ENCODE measurements at regions of chr19 and their contacts with region 1.

Region 1: GRCh38 chr19:1490311-1491113 is at the start of gene PCSK4:
- DNase-seq: peak; percentile 99
- H3K4me3 ChIP-seq: peak within 1 kb of the TSS; percentile 11 to 51 (median 35)
- H3K27ac ChIP-seq: no peak within 1 kb of the TSS
- H3K4me1 ChIP-seq: peaks cover 10% of the 10 kb centered on the region
- H3K27me3 ChIP-seq: peaks cover 0 to 6% of the 10 kb centered on the region in 2 experiments
- CTCF ChIP-seq: no peak
- POLR2A ChIP-seq: peak; percentile 8
- total RNA-seq, gene PCSK4: 0.92 and 1.2 TPM in 2 replicates

Region 2: DNA sequence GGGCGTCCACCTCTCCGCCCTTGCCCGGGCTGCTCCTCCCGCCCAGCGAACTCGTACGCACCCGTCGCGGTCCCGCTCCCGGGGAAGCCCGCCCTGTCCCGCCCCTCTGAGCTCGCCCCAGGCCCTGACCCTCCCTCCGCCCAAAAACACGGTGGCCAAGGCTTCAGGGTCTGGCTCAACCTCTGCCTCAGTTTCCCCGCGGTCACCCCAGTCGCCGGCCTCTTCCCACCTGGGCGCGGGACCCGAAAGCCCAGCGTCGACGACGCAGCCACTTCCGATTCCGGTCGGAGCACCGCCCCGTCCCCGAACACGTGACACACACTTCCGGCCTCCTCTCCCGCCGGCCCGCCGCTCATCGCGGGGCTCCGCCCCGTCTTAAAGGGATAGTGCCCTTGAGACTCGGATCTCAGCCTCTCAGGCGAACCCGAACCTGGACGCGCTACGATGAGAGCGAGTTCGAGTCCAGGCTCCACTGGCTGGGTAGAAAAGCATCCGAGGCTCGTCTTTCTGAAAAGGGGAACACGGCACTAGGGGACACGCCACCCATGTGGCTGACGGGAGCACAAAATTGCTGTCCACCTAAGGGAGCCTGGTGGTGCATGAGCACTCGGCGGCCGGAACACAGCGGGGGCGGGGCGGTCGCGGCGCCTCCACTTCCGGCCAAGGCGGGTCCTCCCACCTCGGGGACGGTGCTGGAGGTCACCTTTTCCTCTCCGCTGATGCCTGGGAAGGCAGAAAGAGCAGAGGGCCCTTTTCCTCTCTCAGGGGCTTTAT is 11.4 kb before region 1 on chr19 and contains the start of gene C19orf25:
- CTCF ChIA-PET with region 1: no interaction called
- POLR2A ChIA-PET with region 1: no interaction called
- dilution Hi-C with region 1: no loop called
- intact Hi-C with region 1: loop called (anchors 1 kb)
- DNase-seq: peak; percentile 91
- H3K4me3 ChIP-seq: peak within 1 kb of the TSS; percentile 75 to 88 (median 75)
- H3K27ac ChIP-seq: peak within 1 kb of the TSS; percentile 15
- H3K4me1 ChIP-seq: peaks cover 3% of the 10 kb centered on the region
- H3K27me3 ChIP-seq: no peaks in the 10 kb centered on the region
- CTCF ChIP-seq: no peak
- POLR2A ChIP-seq: peak; percentile 90
- total RNA-seq, gene C19orf25: 28.0 and 29.0 TPM in 2 replicates

Region 3: DNA sequence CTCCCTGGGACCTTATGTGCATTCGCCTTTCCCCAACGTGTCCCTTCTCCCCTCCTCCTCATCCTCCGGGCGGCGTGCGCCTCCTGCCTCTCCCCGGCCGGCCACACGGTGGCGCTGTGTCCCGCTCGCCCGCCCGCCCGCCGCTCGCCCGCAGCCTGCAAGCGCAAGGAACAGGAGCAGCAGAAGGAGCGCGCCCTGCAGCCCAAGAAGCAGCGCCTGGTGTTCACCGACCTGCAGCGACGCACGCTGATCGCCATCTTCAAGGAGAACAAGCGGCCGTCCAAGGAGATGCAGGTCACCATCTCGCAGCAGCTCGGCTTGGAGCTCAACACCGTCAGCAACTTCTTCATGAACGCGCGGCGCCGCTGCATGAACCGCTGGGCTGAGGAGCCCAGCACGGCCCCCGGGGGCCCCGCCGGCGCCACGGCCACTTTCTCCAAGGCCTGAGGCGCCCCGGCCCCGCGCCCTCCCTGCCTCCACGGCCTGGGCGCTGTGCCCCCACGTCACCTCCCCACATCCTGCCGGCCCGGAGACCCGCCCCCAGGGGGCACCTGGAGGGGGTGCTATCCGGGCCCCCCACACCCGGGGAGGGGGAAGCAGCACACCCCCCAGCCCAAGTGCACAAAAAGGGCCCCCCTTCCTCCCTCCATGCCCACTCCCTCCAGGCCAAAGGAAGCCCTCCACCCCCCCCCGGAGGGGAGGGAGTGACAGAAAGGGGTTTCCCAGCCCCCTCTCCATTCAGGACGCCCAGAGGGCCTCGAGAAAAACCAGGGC is 284.7 kb after region 1 on chr19:
- CTCF ChIA-PET with region 1: no interaction called
- POLR2A ChIA-PET with region 1: no interaction called
- dilution Hi-C with region 1: no loop called
- intact Hi-C with region 1: no loop called
- DNase-seq: no peak
- H3K4me3 ChIP-seq: no peak overlapping the region
- H3K27ac ChIP-seq: no peak overlapping the region
- H3K4me1 ChIP-seq: no peaks in the 10 kb centered on the region
- H3K27me3 ChIP-seq: peaks cover 28 to 34% of the 10 kb centered on the region in 2 experiments
- CTCF ChIP-seq: peak; percentile 39 to 64
- POLR2A ChIP-seq: no peak